ENCODE measurements at regions of chr2 and their contacts with region 1.

Region 1: GRCh38 chr2:102020596-102021181 is 28.9 kb downstream of the IL1R2 start:
- DNase-seq: peak; percentile 63 to 91 (median 80)
- ATAC-seq: peak; percentile 99
- H3K4me3 ChIP-seq: no peak overlapping the region
- H3K4me3 Mint-ChIP-seq: no peak overlapping the region
- H3K27ac ChIP-seq: no peak overlapping the region
- H3K27ac Mint-ChIP-seq: no peak overlapping the region
- H3K4me1 ChIP-seq: peaks cover 4% of the 10 kb centered on the region
- H3K4me1 Mint-ChIP-seq: no peaks in the 10 kb centered on the region
- H3K27me3 ChIP-seq: no peaks in the 10 kb centered on the region
- H3K27me3 Mint-ChIP-seq: no peaks in the 10 kb centered on the region
- CTCF ChIP-seq: peak; percentile 93

Region 2: GRCh38 chr2:102005989-102006885 is 14.5 kb before region 1 on chr2:
- CTCF ChIA-PET with region 1: interaction called, 21 read pairs
- POLR2A ChIA-PET with region 1: interaction called, 3 read pairs
- intact Hi-C with region 1: no loop called
- DNase-seq: peak in 3 of 9 experiments; percentile 20 to 67 (median 51)
- ATAC-seq: peak; percentile 51
- H3K4me3 ChIP-seq: no peak overlapping the region
- H3K4me3 Mint-ChIP-seq: no peak overlapping the region
- H3K27ac ChIP-seq: no peak overlapping the region
- H3K27ac Mint-ChIP-seq: no peak overlapping the region
- H3K4me1 ChIP-seq: peaks cover 14% of the 10 kb centered on the region
- H3K4me1 Mint-ChIP-seq: no peaks in the 10 kb centered on the region
- H3K27me3 ChIP-seq: peaks cover 0 to 3% of the 10 kb centered on the region in 2 experiments
- H3K27me3 Mint-ChIP-seq: no peaks in the 10 kb centered on the region
- CTCF ChIP-seq: peak; percentile 41

Region 3: GRCh38 chr2:102187496-102188150 is 166.9 kb after region 1 on chr2:
- CTCF ChIA-PET with region 1: interaction called, 7 read pairs
- POLR2A ChIA-PET with region 1: no interaction called
- intact Hi-C with region 1: loop called in 1 of 2 experiments (anchors 10 kb)
- DNase-seq: peak in 8 of 9 experiments; percentile 9 to 59 (median 37)
- ATAC-seq: peak; percentile 75
- H3K4me3 ChIP-seq: peak overlapping the region; percentile 20 to 39
- H3K4me3 Mint-ChIP-seq: peak overlapping the region; percentile 87
- H3K27ac ChIP-seq: no peak overlapping the region
- H3K27ac Mint-ChIP-seq: no peak overlapping the region
- H3K4me1 ChIP-seq: no peaks in the 10 kb centered on the region
- H3K4me1 Mint-ChIP-seq: peaks cover 7% of the 10 kb centered on the region
- H3K27me3 ChIP-seq: no peaks in the 10 kb centered on the region
- H3K27me3 Mint-ChIP-seq: peaks cover 21% of the 10 kb centered on the region
- CTCF ChIP-seq: no peak

Region 4: GRCh38 chr2:102251042-102251848 is 230.6 kb after region 1 on chr2:
- CTCF ChIA-PET with region 1: interaction called, 17 read pairs
- POLR2A ChIA-PET with region 1: no interaction called
- intact Hi-C with region 1: no loop called
- DNase-seq: peak; percentile 25 to 75 (median 63)
- ATAC-seq: peak; percentile 75
- H3K4me3 ChIP-seq: peak overlapping the region; percentile 57 to 63
- H3K4me3 Mint-ChIP-seq: peak overlapping the region; percentile 89
- H3K27ac ChIP-seq: no peak overlapping the region
- H3K27ac Mint-ChIP-seq: peak overlapping the region; percentile 52
- H3K4me1 ChIP-seq: no peaks in the 10 kb centered on the region
- H3K4me1 Mint-ChIP-seq: peaks cover 37% of the 10 kb centered on the region
- H3K27me3 ChIP-seq: no peaks in the 10 kb centered on the region
- H3K27me3 Mint-ChIP-seq: no peaks in the 10 kb centered on the region
- CTCF ChIP-seq: peak; percentile 87

Region 5: DNA sequence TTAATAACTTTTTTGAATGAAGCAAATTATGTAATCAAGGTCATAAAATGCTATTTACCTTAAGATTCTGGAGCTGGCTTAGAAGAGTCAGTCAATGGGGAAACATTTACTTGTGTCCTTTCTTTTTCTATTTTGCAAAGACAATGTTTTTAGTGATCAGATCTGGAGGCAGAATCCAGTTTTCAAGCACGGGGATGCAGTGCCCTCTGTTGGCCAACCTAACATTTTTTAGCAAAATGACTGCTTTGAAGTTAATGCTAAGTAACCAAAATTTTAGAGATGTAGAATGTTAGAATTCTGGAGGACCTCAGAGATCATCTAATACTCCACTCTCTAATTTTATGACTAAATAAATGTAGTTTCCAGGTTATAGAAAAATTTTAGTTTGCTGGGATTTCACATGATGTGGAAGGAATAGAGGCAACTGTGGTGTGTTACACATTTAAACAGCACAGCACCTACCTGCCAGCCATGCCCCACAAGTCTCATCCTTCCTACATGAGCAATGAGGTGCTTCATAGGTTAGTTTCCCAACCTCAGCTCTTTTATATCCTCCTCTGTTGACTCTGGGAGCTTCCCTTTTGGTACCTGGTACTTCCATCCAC is 428.8 kb after region 1 on chr2:
- CTCF ChIA-PET with region 1: interaction called, 51 read pairs
- POLR2A ChIA-PET with region 1: no interaction called
- intact Hi-C with region 1: loop called (anchors 1 kb)
- DNase-seq: peak; percentile 36 to 74 (median 61)
- ATAC-seq: no peak
- H3K4me3 ChIP-seq: no peak overlapping the region
- H3K4me3 Mint-ChIP-seq: no peak overlapping the region
- H3K27ac ChIP-seq: no peak overlapping the region
- H3K27ac Mint-ChIP-seq: no peak overlapping the region
- H3K4me1 ChIP-seq: no peaks in the 10 kb centered on the region
- H3K4me1 Mint-ChIP-seq: peaks cover 3% of the 10 kb centered on the region
- H3K27me3 ChIP-seq: no peaks in the 10 kb centered on the region
- H3K27me3 Mint-ChIP-seq: no peaks in the 10 kb centered on the region
- CTCF ChIP-seq: peak; percentile 71

Region 6: GRCh38 chr2:102484310-102485061 is 463.8 kb after region 1 on chr2:
- CTCF ChIA-PET with region 1: no interaction called
- POLR2A ChIA-PET with region 1: no interaction called
- intact Hi-C with region 1: no loop called
- DNase-seq: no peak
- ATAC-seq: no peak
- H3K4me3 ChIP-seq: no peak overlapping the region
- H3K4me3 Mint-ChIP-seq: no peak overlapping the region
- H3K27ac ChIP-seq: no peak overlapping the region
- H3K27ac Mint-ChIP-seq: no peak overlapping the region
- H3K4me1 ChIP-seq: no peaks in the 10 kb centered on the region
- H3K4me1 Mint-ChIP-seq: peaks cover 4% of the 10 kb centered on the region
- H3K27me3 ChIP-seq: no peaks in the 10 kb centered on the region
- H3K27me3 Mint-ChIP-seq: peaks cover 8% of the 10 kb centered on the region
- CTCF ChIP-seq: no peak